A549 (cell line): ENCODE measurements at regions of chr6 and their contacts with region 1.

Region 1: DNA sequence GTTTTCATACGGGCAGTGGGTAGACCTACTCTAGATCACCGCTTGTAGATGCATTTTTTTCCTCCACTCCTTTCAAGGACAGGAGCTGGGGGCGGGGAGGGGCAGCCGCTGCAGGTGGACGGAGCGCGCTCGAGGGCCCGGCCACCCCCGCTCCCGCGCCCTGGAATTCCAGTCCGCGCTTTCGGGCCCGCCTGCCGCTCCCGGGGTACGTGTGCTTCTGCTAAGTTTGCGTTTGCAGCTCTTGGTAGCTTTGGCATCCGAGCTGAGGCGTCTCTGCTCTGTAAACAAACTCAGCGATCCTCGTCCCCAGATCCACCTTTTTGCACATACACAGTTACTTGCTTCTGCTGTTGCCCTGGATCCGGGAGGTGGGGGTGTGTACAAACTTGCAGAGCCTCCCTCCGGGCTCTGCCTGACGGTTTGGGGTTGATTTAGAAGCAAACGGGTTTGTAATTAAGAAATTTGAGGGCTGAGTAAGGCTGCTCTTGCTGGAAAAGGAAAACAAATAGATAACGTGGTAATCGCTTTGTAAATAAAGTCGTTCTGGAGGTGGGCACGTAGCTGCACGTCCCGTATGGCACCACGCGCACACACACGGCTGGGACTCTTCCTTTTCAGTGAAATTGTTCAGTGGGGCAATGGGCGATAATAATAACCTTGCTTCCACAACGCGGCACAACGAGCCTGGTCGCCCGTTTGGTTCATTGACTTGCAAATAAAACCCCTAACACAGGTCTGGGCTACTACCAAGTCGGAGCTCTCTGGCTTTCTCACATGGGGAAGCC is 976 bp upstream of the CITED2 start:
- DNase-seq: peak; percentile 64 to 93
- ATAC-seq: peak; percentile 63 to 79
- H3K4me3 ChIP-seq: peak overlapping the region; percentile 83
- H3K27ac ChIP-seq: peak overlapping the region; percentile 95 to 100
- H3K4me1 ChIP-seq: peaks cover 39% of the 10 kb centered on the region
- CTCF ChIP-seq: no peak
- EP300 ChIP-seq: no peak
- POLR2A ChIP-seq: no peak
- RAD21 ChIP-seq: peak; percentile 20 to 24; a peak in 4 of 5 replicates

Region 2: DNA sequence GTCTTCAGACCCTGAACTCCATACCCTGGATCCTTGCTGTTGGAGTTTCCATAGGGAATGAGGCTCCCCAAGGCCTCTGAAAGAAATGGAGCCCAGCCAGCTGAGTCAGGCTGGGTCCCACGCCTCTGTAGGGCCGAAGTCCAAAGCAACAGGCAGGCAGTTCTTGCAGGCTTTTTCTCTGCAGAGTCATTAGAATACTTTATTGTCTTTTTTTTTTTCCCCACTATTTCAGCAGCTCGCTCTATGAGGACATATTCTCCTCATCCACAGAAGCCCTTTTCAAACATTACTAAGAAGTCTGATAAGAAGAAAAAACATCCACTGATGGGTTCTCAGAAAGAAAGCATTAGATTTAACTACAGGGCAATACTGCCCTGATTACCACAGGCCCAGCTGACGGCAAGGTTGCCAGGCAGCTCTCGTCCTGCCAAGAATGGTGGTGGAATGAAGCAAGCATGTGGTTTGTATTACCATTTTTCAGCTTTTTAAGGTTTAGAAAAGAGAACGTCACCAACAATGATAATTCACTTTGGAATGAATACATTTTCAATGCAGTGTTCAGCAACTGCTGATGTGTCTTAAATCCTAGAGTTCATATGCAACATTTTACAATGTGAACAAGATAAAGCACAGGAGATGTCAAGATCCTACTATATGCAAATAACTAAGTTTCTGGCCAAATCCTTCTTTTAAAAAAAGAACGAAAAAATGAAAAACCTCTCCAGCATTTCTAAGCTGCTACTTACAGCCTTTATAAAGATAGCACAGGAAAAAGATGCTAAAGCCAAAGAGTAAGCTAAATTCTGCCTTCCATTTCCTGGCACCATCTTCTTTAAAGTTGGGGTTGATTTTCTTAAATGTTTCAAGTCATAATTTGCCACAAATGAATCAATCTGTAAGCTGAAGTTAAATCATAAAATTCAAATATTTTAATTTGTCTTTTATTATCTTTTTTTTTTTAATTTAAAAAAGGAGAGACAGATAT is 222.6 kb after region 1 on chr6:
- CTCF ChIA-PET with region 1: no interaction called
- POLR2A ChIA-PET with region 1: interaction called, 13 read pairs
- DNase-seq: peak; percentile 17 to 61
- ATAC-seq: peak; percentile 89 to 93
- H3K4me3 ChIP-seq: no peak overlapping the region
- H3K27ac ChIP-seq: peak overlapping the region; percentile 54 to 61
- H3K4me1 ChIP-seq: peaks cover 27% of the 10 kb centered on the region
- CTCF ChIP-seq: no peak
- EP300 ChIP-seq: no peak
- POLR2A ChIP-seq: no peak
- RAD21 ChIP-seq: no peak

Region 3: GRCh38 chr6:139764498-139764986 is 389.1 kb after region 1 on chr6:
- CTCF ChIA-PET with region 1: no interaction called
- POLR2A ChIA-PET with region 1: interaction called, 14 read pairs
- DNase-seq: peak; percentile 47 to 72
- ATAC-seq: peak; percentile 98 to 99
- H3K4me3 ChIP-seq: no peak overlapping the region
- H3K27ac ChIP-seq: peak overlapping the region; percentile 63 to 77
- H3K4me1 ChIP-seq: peaks cover 38% of the 10 kb centered on the region
- CTCF ChIP-seq: no peak
- EP300 ChIP-seq: no peak; a peak in 1 of 5 replicates
- POLR2A ChIP-seq: no peak
- RAD21 ChIP-seq: 0 out of 5 replicates have a peak, but pooled peaks of 1 of the 2 experiments have one; percentile 2

Region 4: DNA sequence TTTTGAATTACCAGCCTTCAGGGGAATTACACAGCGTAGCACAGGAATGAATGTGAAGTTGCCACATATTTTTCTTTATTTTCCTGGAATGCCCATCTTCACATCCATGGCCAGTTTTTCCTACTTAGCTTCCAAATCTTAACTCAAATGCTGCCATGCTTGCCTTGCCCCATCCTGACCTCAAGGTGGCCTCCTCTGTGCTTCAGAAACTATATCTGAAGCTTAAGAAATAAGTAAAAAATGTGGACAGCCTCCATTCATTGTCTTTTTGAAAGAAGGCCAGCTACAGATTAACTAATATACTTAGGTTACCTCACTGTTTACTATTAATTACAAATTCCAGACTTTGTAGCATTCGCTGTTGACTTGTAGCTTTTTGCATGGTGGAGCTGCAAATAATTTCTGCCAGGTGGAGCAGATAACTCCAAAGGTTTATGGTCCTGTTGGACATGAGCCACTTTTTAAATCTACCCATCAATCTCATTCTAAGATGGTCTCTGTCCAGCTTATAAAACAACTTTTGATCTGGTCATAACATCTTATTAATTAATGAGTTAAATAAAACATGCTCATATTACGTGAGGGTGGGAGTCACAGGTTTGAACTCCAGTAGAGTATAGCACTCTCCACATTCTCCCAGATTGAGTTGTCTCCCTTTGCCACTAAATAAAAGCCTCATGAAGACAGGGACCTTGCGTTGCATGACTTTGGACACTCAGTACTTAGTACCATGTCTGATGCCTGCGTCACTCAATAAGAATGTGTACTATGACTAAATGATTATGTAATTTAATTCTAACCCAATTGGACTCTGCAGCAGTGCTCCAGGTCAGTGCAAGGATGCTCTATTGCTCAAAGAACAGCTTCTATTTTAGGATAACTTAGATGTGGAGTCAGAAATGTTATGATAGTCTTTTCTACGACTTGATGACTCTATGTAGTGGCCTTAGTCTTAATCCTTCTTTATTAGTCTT is 677.6 kb after region 1 on chr6:
- CTCF ChIA-PET with region 1: interaction called, 5 read pairs
- POLR2A ChIA-PET with region 1: interaction called, 12 read pairs
- DNase-seq: peak in 1 of 2 experiments; percentile 17
- ATAC-seq: no peak
- H3K4me3 ChIP-seq: no peak overlapping the region
- H3K27ac ChIP-seq: peak overlapping the region in 1 of 2 experiments; percentile 21; a peak in 2 of 6 replicates
- H3K4me1 ChIP-seq: peaks cover 21% of the 10 kb centered on the region; the same call in 2 of the 3 replicates
- CTCF ChIP-seq: no peak
- EP300 ChIP-seq: no peak
- POLR2A ChIP-seq: no peak
- RAD21 ChIP-seq: peak in 1 of 2 experiments; percentile 17; a peak in 1 of 5 replicates

Region 5: DNA sequence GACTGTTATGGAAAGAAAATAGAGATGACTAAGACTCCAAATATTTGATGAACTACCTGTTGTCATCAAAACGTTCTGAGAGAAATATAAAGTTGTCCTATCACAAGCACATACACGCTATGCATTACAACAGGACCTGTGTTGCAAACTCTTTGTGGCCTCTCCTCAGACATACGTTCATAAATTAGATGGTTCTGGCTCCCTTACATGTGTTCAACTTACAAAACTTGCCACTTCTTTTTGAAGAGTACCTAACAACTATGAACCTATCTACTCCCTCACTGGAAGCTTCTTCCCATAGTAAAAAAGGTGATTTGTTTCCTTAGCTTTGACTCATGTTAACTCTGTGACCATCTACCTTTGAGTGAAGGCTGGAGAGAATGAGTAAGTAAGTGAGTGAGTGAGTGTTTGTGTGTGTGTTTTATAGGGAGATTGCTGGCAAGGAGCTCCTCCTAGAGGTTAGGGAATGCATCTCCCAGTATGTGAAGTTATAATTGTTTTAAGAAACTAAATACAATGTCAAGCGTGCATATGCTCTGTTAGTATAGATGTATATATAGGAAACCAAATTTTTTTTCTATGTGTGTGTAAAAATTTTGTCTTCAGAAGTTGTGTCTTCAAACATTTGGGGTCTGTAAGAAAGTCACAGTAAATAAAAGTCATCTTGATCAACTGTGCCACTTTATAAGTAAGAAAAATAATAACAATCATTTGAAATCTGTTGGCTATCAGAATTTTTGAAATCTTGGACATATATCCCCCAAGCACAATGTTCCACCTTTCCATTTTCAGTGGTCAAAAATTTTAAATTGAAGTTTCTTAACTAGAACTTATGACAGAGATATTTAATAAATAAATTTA is 1546.2 kb after region 1 on chr6:
- CTCF ChIA-PET with region 1: interaction called, 5 read pairs
- POLR2A ChIA-PET with region 1: interaction called, 10 read pairs
- DNase-seq: peak; percentile 9 to 59
- ATAC-seq: peak; percentile 62 to 73; a peak in 4 of 6 replicates
- H3K4me3 ChIP-seq: no peak overlapping the region
- H3K27ac ChIP-seq: no peak overlapping the region; a peak in 1 of 6 replicates
- H3K4me1 ChIP-seq: no peaks in the 10 kb centered on the region
- CTCF ChIP-seq: peak; percentile 56
- EP300 ChIP-seq: no peak
- POLR2A ChIP-seq: no peak
- RAD21 ChIP-seq: peak; percentile 71 to 78